HEK293 (cell line): ENCODE measurements at regions of chr16 and their contacts with region 1.

Region 1: DNA sequence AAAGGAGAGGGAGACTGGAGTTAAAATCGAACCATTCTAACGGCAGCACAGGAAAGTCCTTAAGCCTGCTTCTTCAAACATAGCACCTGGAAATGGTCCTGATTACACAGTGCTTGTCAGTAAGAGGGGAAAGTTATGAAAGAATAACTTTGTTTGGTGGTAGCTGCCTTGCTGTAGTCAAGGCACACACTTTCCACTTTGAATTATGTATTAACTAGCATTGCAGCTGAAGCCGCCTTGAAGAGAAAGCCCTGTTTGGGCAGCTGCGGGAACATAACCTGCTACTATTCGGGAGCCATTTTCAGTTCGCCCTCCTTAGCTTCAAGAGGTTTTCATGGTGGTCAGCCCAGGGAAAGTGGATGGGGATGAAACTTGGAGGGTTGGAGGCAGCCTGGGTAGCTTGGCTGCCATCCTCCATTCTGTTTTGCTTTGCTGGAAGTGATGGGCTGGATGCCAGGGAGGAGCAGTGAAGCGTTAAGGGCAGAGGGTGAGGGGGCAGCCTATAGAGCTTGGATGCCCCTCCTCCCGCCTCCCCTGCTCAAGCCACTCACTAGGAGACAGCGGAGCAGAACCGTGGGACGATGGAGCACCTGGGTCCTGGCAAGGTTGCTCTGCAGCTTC is 5.3 kb upstream of the HAS3 start:
- H3K4me3 ChIP-seq: no peak overlapping the region
- H3K27ac ChIP-seq: no peak overlapping the region
- H3K4me1 ChIP-seq: no peaks in the 10 kb centered on the region
- CTCF ChIP-seq: no peak

Region 2: GRCh38 chr16:69084289-69084688 is 15.9 kb before region 1 on chr16:
- CTCF ChIA-PET with region 1: no interaction called
- POLR2A ChIA-PET with region 1: no interaction called
- H3K4me3 ChIP-seq: no peak overlapping the region
- H3K27ac ChIP-seq: no peak overlapping the region
- H3K4me1 ChIP-seq: peaks cover 3% of the 10 kb centered on the region; the same call in 1 of the 2 replicates
- CTCF ChIP-seq: no peak

Region 3: DNA sequence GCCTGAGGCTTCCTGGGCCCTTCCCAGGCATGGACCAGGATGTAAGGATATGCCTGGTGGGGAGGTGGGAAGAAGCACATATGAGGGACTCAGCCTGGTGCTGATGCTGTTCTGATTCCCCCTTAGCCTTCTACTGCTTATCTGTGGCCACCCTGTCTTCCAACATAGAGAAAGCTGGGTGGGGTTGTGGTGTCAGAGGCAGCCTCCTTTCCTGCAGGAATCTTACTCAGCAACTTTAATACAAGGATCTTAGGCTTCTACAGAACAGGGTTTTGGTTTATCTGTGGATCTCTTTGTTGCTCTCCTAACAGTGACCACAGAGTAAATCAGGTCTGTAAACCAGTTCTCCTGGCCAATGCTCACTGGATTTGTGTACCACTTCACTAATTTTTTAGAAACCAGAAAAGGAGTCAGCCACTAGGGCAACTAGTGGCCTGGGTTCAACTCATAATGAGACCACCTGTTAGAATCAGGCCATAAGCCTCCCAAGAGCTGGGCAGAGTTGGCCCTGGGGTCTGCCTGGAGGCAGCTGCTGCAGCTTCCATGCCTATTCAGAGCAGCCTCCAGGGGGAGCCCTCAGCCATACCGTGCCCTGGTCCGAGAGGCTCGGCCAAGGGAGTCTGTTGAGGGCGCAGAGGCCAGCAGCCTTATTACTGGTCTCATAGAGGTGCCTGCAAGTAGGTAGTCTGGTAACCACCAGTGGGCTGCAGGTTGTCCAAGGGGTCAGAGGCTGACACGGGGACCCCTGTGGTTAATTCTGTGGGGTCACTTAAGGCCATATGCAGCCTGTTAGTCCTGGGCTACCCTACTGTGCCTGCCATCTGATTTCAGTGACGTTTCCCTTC is 12.3 kb after region 1 on chr16:
- CTCF ChIA-PET with region 1: interaction called, 10 read pairs
- POLR2A ChIA-PET with region 1: interaction called, 3 read pairs
- H3K4me3 ChIP-seq: no peak overlapping the region
- H3K27ac ChIP-seq: no peak overlapping the region
- H3K4me1 ChIP-seq: no peaks in the 10 kb centered on the region
- CTCF ChIP-seq: peak; percentile 69